H1 (cell line): ENCODE measurements at regions of chr19 and their contacts with region 1.

Region 1: DNA sequence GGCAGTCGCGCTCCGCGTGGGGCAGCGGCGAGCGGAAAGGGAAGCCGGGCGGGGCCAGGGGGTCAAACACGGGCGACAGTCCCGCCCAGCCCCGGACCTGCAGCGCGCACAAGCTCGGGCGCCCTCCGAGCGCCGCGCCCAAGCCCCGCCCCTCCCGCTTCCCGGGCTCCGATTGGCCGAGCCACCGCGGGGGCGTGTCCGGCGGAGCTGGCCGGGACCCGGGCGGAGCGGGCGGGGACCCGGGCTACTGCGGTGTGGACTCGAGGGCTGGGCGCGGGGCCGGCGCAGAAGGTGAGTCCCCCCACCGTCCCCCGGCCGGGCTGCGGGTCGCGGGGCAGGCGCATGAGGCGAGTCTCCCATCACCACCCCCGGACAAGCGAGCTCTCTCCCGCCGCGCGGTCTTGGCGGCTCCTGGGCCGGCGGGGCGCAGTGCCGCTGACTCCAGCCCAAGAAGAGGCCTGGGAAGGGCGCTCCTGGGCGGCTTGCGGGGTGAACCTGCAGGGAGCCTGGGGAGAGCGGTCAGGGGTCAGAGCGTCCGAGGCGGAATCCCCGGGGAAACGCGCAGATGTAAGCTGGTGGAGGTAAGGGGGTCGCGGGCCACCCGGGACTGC is at the start of gene PLEKHF1:
- DNase-seq: peak in 1 of 2 experiments; percentile 96
- H3K4me3 ChIP-seq: peak within 1 kb of the TSS; percentile 34 to 97 (median 74)
- H3K27ac ChIP-seq: no peak within 1 kb of the TSS
- H3K4me1 ChIP-seq: peaks cover 0 to 21% (median 18%) of the 10 kb centered on the region in 4 experiments; a peak in 6 of 7 replicates
- H3K27me3 ChIP-seq: peaks cover 0 to 10% (median 1%) of the 10 kb centered on the region in 4 experiments; a peak in 4 of 7 replicates
- CTCF ChIP-seq: no peak
- EP300 ChIP-seq: no peak
- POLR2A ChIP-seq: peak in 1 of 2 experiments; percentile 23; a peak in 1 of 3 replicates
- RAD21 ChIP-seq: no peak
- total RNA-seq, gene PLEKHF1: 11.1 and 12.0 TPM in 2 replicates

Region 2: GRCh38 chr19:29622138-29623070 is 42.9 kb before region 1 on chr19:
- CTCF ChIA-PET with region 1: interaction called, 32 read pairs
- POLR2A ChIA-PET with region 1: interaction called, 4 read pairs
- DNase-seq: no peak
- H3K4me3 ChIP-seq: no peak overlapping the region
- H3K27ac ChIP-seq: no peak overlapping the region
- H3K4me1 ChIP-seq: peaks cover 2 to 8% (median 5%) of the 10 kb centered on the region in 4 experiments; a peak in 6 of 7 replicates
- H3K27me3 ChIP-seq: peaks cover 0 to 2% (median 0%) of the 10 kb centered on the region in 4 experiments; a peak in 2 of 7 replicates
- CTCF ChIP-seq: no peak
- EP300 ChIP-seq: no peak
- POLR2A ChIP-seq: no peak
- RAD21 ChIP-seq: no peak

Region 3: DNA sequence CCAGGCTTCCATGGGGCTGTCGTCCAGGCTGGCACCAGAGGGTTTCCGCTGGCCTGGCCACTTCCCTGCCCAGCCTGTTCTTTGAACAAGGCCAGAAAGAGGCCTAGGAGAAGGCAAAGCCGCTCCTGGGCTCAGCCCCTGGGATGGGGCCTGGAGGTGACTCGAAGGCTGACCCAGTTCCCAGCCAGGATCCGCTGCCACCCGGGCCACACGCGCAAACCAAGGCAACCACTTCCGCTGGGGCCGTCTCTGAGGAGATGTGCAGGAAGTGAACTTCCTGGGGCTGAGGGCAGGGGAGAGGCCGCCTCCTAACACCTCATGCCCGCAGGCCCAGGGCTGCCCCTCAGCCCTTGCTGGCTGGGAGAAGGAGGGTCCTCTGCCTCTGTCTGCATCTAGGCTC is 15.1 kb after region 1 on chr19:
- CTCF ChIA-PET with region 1: interaction called, 18 read pairs
- POLR2A ChIA-PET with region 1: interaction called, 13 read pairs
- DNase-seq: no peak
- H3K4me3 ChIP-seq: no peak overlapping the region
- H3K27ac ChIP-seq: no peak overlapping the region
- H3K4me1 ChIP-seq: peaks cover 0 to 4% (median 0%) of the 10 kb centered on the region in 4 experiments; a peak in 2 of 7 replicates
- H3K27me3 ChIP-seq: no peaks in the 10 kb centered on the region
- CTCF ChIP-seq: no peak
- EP300 ChIP-seq: no peak
- POLR2A ChIP-seq: no peak
- RAD21 ChIP-seq: no peak

Region 4: DNA sequence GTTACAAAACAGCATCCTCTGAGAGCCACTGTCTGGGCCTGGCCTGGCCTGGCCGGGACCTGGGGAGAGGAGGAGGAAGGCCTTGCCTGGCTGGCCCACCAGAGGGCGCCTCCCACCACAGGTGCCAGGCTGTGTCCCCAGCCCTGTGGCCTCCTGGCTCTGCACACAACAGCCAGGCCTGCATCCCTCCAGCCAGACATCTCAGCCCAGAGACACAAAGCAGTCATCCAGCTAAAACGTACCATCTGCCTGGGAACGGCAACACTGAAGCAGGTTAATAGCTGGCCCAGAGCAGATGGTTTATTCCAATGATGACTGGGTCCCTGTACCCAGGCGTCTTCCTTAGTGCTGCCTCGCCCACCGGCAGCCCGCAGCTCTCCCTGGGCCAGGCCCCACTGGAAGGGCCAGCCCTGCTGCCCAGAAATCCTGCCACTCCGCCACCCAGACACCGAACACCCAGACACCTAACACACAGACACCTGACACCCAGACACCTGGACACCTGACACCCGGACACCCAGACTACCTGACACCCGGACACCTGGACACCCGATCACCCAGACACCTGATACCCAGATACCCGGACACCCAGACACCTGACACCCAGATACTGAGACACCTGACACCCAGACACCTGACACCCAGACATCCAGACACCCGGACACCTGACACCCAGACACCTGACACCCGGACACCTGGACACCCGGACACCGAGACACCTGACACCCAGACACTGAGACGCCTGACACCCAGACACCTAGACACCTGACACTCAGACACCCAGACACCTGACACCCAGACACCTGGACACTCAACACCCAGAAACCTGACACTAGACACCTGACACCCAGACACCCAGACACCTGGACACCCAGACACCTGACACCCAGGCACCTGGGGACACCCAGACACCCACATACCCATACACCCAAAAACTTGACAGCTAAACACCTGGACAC is 29.6 kb after region 1 on chr19:
- CTCF ChIA-PET with region 1: interaction called, 14 read pairs
- POLR2A ChIA-PET with region 1: interaction called, 4 read pairs
- DNase-seq: peak; percentile 43 to 92
- H3K4me3 ChIP-seq: no peak overlapping the region
- H3K27ac ChIP-seq: no peak overlapping the region
- H3K4me1 ChIP-seq: peaks cover 0 to 4% (median 1%) of the 10 kb centered on the region in 4 experiments; a peak in 2 of 7 replicates
- H3K27me3 ChIP-seq: no peaks in the 10 kb centered on the region
- CTCF ChIP-seq: peak; percentile 94 to 97 (median 97)
- EP300 ChIP-seq: no peak
- POLR2A ChIP-seq: no peak
- RAD21 ChIP-seq: peak; percentile 86 to 94